ENCODE measurements at regions of chr16 and their contacts with region 1.

Region 1: DNA sequence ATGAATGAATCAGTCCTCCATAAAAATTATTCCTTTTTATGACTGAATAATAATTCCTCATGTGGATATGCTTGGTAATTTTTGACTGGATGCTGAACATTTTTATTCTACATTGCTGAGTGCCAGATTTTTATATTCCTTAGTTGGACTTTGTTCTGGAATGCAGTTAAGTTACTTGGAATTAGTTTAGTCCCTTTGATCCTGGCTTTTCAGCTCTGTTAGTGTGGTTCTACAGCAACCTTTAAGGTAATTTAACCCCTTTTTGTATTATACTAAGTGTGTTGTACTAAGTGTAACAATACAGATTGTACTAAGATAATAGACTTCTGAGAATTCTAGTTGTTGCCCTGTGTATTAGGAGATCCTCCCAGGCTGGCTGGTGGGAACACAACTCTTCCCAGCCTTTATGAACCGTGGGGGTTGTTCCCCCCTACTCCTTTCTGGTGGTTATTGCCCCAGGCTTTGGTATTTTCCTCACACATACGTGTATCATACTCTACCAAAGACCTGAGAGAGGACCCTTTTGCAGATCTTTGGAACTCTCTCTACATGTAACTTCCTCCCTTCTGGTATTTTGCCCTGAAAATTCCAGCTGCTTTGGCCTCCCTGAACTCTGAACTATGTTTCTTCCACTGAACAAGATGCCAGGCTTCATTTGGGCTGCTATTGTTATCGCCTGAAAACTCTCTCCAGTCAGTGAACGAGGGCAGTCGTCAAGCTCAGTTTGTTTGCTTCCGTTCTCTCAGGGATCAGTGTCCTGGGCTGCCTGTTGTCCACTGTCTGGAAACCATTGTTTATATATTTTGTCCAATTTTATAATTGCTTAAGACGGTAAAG is 30.5 kb downstream of the TANGO6 start:
- DNase-seq: no peak
- H3K4me3 ChIP-seq: no peak overlapping the region
- H3K27me3 ChIP-seq: no peaks in the 10 kb centered on the region
- CTCF ChIP-seq: no peak

Region 2: GRCh38 chr16:69057400-69058378 is 183.8 kb after region 1 on chr16:
- CTCF ChIA-PET with region 1: no interaction called
- POLR2A ChIA-PET with region 1: no interaction called
- DNase-seq: peak; percentile 43
- H3K4me3 ChIP-seq: no peak overlapping the region
- H3K27me3 ChIP-seq: no peaks in the 10 kb centered on the region
- CTCF ChIP-seq: no peak

Region 3: DNA sequence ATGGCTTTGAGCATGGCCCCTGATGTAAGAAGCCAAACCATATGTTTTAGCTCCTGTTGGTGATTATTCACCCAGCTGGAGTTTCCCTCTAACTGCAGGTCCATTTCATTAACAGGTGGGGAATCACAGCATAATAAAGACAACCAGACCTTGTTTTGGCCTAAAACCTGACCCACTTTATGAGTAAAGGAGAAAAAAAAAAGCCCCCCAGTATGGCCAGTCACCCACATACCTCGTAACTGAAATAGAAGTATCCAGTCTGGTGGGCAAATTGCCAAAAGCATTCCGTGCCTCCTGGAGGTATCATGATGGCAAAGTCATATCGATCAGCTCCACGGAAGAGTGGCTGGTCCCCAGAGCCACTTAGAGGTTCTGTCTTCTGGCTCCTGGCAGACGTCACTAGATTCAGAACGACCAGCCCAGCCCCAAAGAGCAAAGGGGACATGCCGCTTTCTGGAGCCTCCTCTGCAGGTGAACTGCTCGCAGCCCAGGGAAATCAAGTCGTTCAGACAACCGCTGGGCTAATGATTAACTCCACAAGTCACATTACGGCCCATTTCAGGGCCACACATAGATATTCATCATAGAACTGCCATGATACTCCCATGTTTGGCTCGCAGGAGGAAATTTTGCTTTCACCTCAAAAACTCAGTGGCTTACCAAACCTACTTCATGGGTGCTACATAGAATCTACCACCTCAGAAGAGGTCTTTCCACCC is 477.6 kb after region 1 on chr16 and contains the start of gene TMED6:
- CTCF ChIA-PET with region 1: no interaction called
- POLR2A ChIA-PET with region 1: interaction called, 21 read pairs
- DNase-seq: no peak
- H3K4me3 ChIP-seq: no peak within 1 kb of the TSS
- H3K27me3 ChIP-seq: no peaks in the 10 kb centered on the region
- CTCF ChIP-seq: no peak
- polyA plus RNA-seq, gene TMED6: 0.13 TPM in 1 of 2 replicates, not detected in the other